G401 (cell line): ENCODE measurements at regions of chr9 and their contacts with region 1.

Region 1: DNA sequence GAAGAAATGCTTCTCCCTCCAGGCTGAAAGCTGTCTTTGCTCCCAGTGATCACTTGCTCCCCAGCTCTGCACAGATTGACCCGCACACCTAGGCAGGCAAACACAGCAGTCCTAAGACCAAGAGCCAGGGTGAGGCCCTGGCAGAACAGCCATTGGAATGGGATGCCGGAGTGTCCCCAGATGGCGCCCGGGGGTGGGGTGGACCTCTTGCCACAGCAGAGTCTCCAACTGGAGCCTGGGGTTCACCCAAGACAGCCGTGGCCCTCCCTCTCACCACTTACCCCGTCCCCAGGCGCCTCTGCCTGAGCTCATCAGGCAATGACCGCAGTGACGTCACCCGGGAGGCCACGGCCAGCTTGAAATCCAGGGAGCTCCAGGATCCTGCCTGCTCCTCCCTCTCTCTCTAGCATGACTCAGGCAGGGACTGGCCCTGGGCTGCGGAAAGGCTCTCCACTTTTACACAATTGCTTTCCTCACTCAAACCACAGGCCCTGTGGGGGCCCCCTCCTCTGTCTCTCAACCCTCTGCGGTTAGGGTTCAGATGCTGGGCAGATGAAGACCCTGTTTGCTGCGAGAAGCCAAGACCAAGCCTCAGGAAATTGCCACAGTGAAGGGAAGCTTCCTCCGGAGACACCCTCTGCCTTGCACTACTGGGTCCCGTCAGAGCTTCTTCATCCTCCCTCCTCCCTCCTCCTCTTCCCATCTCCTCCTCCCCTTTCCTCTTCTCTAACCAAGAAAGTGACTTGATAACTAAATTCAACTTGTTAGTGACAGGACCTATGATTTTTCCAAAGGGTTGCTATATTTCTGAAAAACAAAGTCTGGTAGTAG is 24.3 kb upstream of the PTGES start:
- DNase-seq: peak; percentile 76

Region 2: GRCh38 chr9:129676975-129677841 is 99.9 kb before region 1 on chr9:
- in situ Hi-C with region 1: no loop called
- DNase-seq: no peak

Region 3: GRCh38 chr9:129726322-129727160 is 50.6 kb before region 1 on chr9:
- in situ Hi-C with region 1: loop called (anchors 5 kb)
- DNase-seq: peak; percentile 44

Region 4: DNA sequence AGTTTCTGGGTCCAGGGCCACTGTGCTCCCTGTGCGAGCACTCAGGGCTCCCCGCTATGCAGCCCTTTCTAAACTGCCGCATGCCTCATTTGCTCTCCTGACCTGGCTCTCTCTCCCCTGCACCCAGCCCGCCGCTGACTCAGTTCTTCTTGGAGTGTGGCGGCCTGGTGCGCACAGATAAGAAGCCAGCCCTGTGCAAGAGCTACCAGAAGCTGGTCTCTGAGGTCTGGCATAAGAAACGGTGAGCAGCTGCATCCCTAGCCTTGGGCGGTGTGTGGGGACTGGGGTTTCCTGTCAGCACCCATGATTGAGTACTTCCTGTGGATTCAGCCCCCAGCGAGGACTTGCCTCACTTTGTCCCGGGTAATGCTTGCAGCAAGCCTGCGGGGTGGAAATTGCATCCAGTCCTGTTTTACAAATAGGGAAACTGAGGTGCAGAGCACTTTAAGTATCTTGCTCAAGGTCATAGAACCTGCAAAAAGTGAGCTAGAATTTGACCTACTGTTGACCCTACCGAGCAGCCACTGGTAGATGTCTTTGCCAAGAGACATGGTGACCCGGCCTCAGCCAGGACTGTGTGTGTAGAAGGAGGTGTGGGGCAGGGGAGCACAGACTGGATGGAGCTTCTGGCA is 86.0 kb after region 1 on chr9:
- in situ Hi-C with region 1: no loop called
- DNase-seq: no peak